Naive thymus-derived CD4-positive, alpha-beta T cell (primary cell): ENCODE measurements at regions of chr2 and their contacts with region 1.

Region 1: DNA sequence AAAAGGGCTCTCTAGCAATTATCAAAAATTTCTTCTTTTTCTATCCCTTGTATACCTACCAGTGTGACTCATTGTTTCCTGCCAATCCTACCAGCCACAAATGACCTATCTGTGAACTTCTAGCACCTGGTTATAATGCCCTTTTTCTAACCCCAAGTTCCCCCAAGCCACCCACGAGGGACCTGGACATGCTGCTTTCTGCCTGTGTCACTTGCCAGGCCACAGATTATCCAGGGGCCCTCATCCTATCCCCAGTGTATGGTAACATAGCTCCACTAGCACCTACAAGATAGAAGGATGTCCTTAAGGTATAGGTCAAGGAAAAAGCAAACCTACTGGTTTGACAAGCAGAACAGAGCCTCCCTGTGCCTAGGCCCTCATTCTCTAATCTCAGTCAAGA is 26.8 kb downstream of the AAK1 start:
- DNase-seq: peak in 1 of 9 donors; percentile 45
- ATAC-seq: no peak
- H3K4me3 ChIP-seq: no peak overlapping the region
- H3K4me3 Mint-ChIP-seq: peak overlapping the region in 6 of 10 donors; percentile 8 to 52 (median 34)
- H3K27ac ChIP-seq: no peak overlapping the region
- H3K27ac Mint-ChIP-seq: peak overlapping the region in 6 of 9 donors; percentile 22 to 90 (median 70)
- H3K4me1 ChIP-seq: peaks cover 63 to 68% of the 10 kb centered on the region in 2 donors
- H3K4me1 Mint-ChIP-seq: peaks cover 0 to 45% (median 33%) of the 10 kb centered on the region in 7 donors
- H3K27me3 ChIP-seq: no peaks in the 10 kb centered on the region
- H3K27me3 Mint-ChIP-seq: no peaks in the 10 kb centered on the region

Region 2: GRCh38 chr2:68995916-68996315 is 620.8 kb before region 1 on chr2:
- CTCF ChIA-PET with region 1: no interaction called
- POLR2A ChIA-PET with region 1: no interaction called
- intact Hi-C with region 1: no loop called
- DNase-seq: no peak
- ATAC-seq: no peak
- H3K4me3 ChIP-seq: no peak overlapping the region
- H3K4me3 Mint-ChIP-seq: no peak overlapping the region
- H3K27ac ChIP-seq: no peak overlapping the region
- H3K27ac Mint-ChIP-seq: no peak overlapping the region
- H3K4me1 ChIP-seq: no peaks in the 10 kb centered on the region
- H3K4me1 Mint-ChIP-seq: no peaks in the 10 kb centered on the region
- H3K27me3 ChIP-seq: no peaks in the 10 kb centered on the region
- H3K27me3 Mint-ChIP-seq: peaks cover 5 to 43% (median 23%) of the 10 kb centered on the region in 5 donors

Region 3: GRCh38 chr2:69634196-69634821 is 17.6 kb after region 1 on chr2:
- CTCF ChIA-PET with region 1: interaction called, 5 read pairs
- POLR2A ChIA-PET with region 1: interaction called, 17 read pairs
- intact Hi-C with region 1: no loop called
- DNase-seq: no peak
- ATAC-seq: peak; percentile 70
- H3K4me3 ChIP-seq: no peak overlapping the region
- H3K4me3 Mint-ChIP-seq: peak overlapping the region in 7 of 10 donors; percentile 19 to 70 (median 48)
- H3K27ac ChIP-seq: peak overlapping the region; percentile 6
- H3K27ac Mint-ChIP-seq: peak overlapping the region in 8 of 9 donors; percentile 28 to 83 (median 59)
- H3K4me1 ChIP-seq: peaks cover 40 to 70% of the 10 kb centered on the region in 2 donors
- H3K4me1 Mint-ChIP-seq: peaks cover 56 to 63% (median 59%) of the 10 kb centered on the region in 7 donors
- H3K27me3 ChIP-seq: no peaks in the 10 kb centered on the region
- H3K27me3 Mint-ChIP-seq: no peaks in the 10 kb centered on the region